Activated naive CD4-positive, alpha-beta T cell treated with anti-CD3 and anti-CD28 coated beads for 36 hours (primary cell): ENCODE measurements at regions of chr5 and their contacts with region 1.

Region 1: GRCh38 chr5:66864331-66864840 is 268.2 kb downstream of the MAST4 start:
- DNase-seq: peak; percentile 39
- H3K4me3 Mint-ChIP-seq: no peak overlapping the region
- H3K27ac Mint-ChIP-seq: no peak overlapping the region
- H3K4me1 Mint-ChIP-seq: no peaks in the 10 kb centered on the region
- H3K27me3 Mint-ChIP-seq: peaks cover 30% of the 10 kb centered on the region

Region 2: DNA sequence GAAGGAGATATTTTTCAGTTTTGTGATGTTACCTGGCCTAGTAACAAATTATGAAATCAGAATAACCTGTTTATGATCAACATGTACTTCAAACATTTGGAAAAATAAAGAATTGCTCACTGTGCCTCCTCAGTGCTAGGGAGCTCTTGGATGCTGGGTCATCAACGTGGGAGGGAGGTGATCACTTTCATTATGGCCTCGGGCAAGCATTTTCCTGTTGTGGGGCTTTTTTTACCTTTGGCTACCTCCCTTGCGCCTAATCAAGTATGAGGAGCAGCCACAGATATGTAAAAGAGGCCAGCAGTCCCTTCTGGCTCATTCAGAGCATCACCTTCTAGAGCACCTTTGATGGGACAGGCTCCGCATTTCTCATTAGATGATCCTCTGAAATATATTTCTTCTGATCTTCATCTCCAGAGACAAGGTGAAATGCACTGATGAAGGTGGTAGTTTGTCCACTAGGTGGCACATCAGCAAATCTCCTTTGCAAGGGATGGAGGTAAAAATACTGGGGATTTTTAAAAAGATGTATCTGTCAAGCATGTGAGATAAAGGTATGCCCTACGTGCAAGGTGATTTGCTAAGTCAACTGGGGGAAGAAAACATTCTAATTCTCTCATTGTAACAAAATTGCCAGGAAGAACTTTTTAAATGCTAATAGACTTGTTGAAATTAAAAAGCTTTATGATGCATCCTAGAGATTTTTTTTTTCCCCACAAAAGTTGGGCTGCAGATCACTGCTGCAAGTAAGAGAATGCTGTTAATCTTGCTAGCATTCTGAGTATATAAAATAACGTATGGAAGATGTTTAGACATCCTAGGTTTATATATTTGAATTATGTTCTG is 50.0 kb before region 1 on chr5:
- CTCF ChIA-PET with region 1: interaction called, 16 read pairs
- intact Hi-C with region 1: loop called (anchors 1 kb)
- DNase-seq: peak; percentile 79
- H3K4me3 Mint-ChIP-seq: no peak overlapping the region
- H3K27ac Mint-ChIP-seq: no peak overlapping the region
- H3K4me1 Mint-ChIP-seq: peaks cover 3% of the 10 kb centered on the region
- H3K27me3 Mint-ChIP-seq: no peaks in the 10 kb centered on the region